ENCODE measurements at regions of chr20 and their contacts with region 1.

Region 1: GRCh38 chr20:2302374-2303060 is 6.7 kb downstream of the TGM3 start:
- DNase-seq: no peak
- H3K4me3 ChIP-seq: no peak overlapping the region
- H3K27ac ChIP-seq: no peak overlapping the region
- H3K4me1 ChIP-seq: peaks cover 0 to 1% (median 0%) of the 10 kb centered on the region in 4 experiments; a peak in 2 of 7 replicates
- H3K27me3 ChIP-seq: no peaks in the 10 kb centered on the region; a peak in 1 of 7 replicates
- CTCF ChIP-seq: peak; percentile 32 to 46 (median 41)
- EP300 ChIP-seq: no peak
- POLR2A ChIP-seq: no peak
- RAD21 ChIP-seq: peak; percentile 22 to 32; a peak in 2 of 4 replicates

Region 2: GRCh38 chr20:2314759-2315439 is 12.4 kb after region 1 on chr20:
- CTCF ChIA-PET with region 1: interaction called, 10 read pairs
- POLR2A ChIA-PET with region 1: interaction called, 3 read pairs
- DNase-seq: no peak
- H3K4me3 ChIP-seq: no peak overlapping the region
- H3K27ac ChIP-seq: no peak overlapping the region
- H3K4me1 ChIP-seq: no peaks in the 10 kb centered on the region
- H3K27me3 ChIP-seq: no peaks in the 10 kb centered on the region
- CTCF ChIP-seq: no peak
- EP300 ChIP-seq: no peak
- POLR2A ChIP-seq: no peak
- RAD21 ChIP-seq: no peak

Measured in H1 (cell line).